ENCODE measurements at regions of chr19 and their contacts with region 1.

Region 1: GRCh38 chr19:14031719-14032480 is at the start of gene IL27RA:
- DNase-seq: peak; percentile 85
- ATAC-seq: peak; percentile 85
- H3K4me3 Mint-ChIP-seq: peak within 1 kb of the TSS; percentile 97
- H3K27ac Mint-ChIP-seq: peak within 1 kb of the TSS; percentile 97
- H3K4me1 Mint-ChIP-seq: peaks cover 15% of the 10 kb centered on the region
- H3K27me3 Mint-ChIP-seq: peaks cover 4% of the 10 kb centered on the region
- total RNA-seq, gene IL27RA: 41.6 to 43.8 TPM

Region 2: DNA sequence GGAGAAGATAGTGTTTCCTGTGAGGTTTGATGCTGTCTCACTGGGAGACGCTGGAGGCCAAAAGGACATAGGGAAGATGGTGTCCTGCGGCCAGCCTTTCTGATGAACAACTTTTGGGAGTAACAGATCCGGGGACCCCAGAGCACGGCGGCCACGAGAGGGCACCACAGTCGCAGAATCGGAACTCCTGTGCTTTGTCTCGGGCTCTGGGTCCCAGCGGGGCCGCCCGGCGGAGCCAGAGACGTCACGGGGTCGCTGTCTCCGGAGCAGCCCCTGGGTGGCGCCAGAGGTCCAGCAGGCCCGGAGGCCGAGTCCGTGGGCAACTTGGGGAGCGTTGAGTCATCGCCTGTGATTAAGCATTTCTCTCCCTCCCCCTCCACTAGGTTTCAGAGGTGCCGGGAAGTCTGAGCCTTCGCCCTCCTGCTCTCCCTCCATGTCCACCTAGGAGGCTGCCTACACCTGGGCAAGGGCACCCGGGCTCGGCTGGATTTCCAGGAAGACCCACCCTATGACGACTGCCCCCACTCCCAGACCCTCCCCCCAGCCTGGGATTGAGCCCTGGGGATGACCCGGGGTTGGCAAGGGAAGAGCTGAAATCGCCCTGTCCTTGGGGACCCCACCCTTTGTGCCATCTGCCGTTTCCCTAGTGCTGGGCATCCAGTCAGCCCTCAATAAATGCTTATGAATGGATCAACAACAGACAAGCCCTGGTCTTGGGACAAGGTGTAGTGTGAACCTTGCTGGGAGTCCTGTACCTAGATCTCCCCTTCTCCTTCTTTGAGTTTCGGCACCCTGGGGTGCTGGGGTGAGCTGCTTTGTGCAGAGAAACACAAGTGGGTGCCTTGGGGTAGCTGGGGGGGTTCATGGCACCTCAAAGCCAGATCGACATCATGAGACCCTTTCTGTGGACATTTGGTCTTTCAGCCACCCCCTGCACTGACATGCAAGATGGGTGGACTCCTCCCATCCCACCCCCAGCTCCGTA is 151.5 kb before region 1 on chr19:
- POLR2A ChIA-PET with region 1: interaction called, 13 read pairs
- DNase-seq: peak; percentile 100
- ATAC-seq: peak; percentile 93
- H3K4me3 Mint-ChIP-seq: peak overlapping the region; percentile 62
- H3K27ac Mint-ChIP-seq: peak overlapping the region; percentile 73
- H3K4me1 Mint-ChIP-seq: peaks cover 31% of the 10 kb centered on the region
- H3K27me3 Mint-ChIP-seq: peaks cover 4% of the 10 kb centered on the region

Region 3: DNA sequence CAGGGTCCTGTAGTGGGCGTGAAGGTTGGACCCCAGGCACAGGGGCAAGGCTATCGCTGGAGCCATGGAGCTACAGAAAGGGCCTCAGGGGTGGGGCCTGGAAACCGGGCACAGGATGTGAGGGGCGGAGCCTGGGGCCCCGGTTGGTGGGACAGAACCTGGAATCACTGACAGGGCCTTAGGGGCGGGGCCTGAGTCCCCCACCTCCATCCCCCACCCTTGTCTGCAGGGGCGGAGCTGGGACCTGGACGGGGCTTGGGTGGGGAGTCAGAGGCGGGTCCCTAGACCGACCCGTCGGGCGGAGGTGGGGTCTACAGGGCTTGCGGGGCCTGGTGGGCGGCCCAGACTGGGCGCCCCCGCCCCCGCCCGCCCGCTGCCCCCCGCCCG is 53.6 kb before region 1 on chr19:
- POLR2A ChIA-PET with region 1: interaction called, 15 read pairs
- DNase-seq: peak; percentile 59
- ATAC-seq: peak; percentile 16
- H3K4me3 Mint-ChIP-seq: peak overlapping the region; percentile 30
- H3K27ac Mint-ChIP-seq: peak overlapping the region; percentile 60
- H3K4me1 Mint-ChIP-seq: peaks cover 45% of the 10 kb centered on the region
- H3K27me3 Mint-ChIP-seq: no peaks in the 10 kb centered on the region

Region 4: DNA sequence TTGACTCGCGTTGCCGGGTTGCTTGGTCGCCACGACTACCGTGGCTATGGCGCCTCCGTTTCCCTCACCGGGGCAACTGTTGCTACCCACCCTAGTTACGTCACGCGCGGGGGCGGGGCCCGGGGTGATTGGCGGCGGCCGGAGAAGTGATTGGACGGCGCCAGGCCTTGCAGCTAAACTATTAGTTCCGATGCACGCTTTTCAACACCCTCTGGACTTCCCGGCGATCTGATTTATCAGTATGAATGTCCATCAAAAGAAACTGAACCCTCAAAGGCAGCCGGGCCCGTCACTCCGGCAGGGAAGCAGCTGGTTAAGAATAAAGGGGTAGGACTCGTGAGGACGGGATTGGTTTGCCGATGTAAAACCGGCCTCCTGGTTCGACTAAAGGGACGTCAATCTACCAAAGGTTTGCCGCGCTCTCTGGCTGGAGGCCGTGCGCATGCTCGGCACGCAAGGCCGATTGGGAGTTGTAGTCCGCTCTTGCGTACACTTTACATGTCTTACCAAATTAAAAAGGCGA is 25.6 kb before region 1 on chr19 and contains the start of gene RFX1:
- POLR2A ChIA-PET with region 1: interaction called, 41 read pairs
- DNase-seq: peak; percentile 100
- ATAC-seq: peak; percentile 83
- H3K4me3 Mint-ChIP-seq: peak within 1 kb of the TSS; percentile 94
- H3K27ac Mint-ChIP-seq: peak within 1 kb of the TSS; percentile 96
- H3K4me1 Mint-ChIP-seq: peaks cover 33% of the 10 kb centered on the region
- H3K27me3 Mint-ChIP-seq: no peaks in the 10 kb centered on the region
- total RNA-seq, gene RFX1: 17.7 to 22.2 TPM

Region 5: GRCh38 chr19:14073261-14073924 is 41.5 kb after region 1 on chr19:
- POLR2A ChIA-PET with region 1: interaction called, 11 read pairs
- DNase-seq: peak; percentile 93
- ATAC-seq: peak; percentile 77
- H3K4me3 Mint-ChIP-seq: peak overlapping the region; percentile 96
- H3K27ac Mint-ChIP-seq: peak overlapping the region; percentile 81
- H3K4me1 Mint-ChIP-seq: peaks cover 14% of the 10 kb centered on the region
- H3K27me3 Mint-ChIP-seq: peaks cover 6% of the 10 kb centered on the region

Region 6: DNA sequence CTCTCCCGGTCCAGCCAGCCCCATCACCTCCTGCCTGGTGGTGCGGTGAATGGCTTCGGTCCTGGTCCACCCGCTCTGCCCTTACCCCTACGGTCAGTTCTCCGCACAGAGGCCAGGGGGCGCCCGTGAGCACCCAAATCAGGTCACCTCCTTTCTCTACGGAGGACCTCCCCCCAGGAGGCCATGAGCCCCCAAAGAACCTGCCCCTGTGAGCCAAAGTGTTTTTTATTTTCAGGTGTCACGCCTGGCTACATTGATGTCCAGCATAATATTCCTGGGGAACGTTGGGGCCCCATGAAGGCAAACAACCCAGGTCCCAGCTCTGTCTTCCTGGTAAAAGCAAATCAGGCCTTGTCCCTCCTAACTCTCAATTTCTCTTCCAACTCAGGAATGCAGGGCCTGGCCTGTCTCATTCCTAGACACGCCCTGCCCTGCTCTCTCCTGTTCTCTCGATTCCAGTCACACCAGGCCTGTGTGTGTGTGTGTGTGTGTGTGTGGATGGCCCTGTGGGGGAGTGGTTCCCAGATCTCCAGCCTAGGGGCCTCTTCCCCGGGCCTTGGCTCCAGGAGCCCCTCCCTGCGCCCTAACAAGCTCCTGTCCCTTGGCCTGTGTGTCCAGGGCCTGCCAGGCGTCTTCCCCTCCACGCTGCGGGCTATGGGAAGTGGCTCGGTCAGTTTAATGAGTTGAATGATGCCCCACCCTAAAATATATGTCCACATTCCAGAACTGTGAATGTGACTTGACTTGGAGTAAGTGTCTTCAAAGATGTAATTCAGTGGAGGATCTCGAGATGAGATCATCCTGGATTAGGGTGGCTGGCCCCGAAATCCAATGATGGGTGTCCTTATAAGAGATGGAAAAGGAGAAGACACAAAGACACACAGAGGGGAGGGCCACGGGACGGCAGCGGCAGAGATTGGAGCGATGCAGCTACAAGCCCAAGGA is 473.9 kb after region 1 on chr19:
- POLR2A ChIA-PET with region 1: no interaction called
- DNase-seq: peak; percentile 88
- ATAC-seq: peak; percentile 48
- H3K4me3 Mint-ChIP-seq: peak overlapping the region; percentile 77
- H3K27ac Mint-ChIP-seq: peak overlapping the region; percentile 92
- H3K4me1 Mint-ChIP-seq: peaks cover 40% of the 10 kb centered on the region
- H3K27me3 Mint-ChIP-seq: peaks cover 4% of the 10 kb centered on the region

Measured in activated naive CD8-positive, alpha-beta T cell treated with anti-CD3 and anti-CD28 coated beads, Interleukin-2, amount 10 ng/mL, durations not matched to agents 7 days and 5 days (primary cell).